ENCODE measurements at regions of chr4 and their contacts with region 1.

Region 1: DNA sequence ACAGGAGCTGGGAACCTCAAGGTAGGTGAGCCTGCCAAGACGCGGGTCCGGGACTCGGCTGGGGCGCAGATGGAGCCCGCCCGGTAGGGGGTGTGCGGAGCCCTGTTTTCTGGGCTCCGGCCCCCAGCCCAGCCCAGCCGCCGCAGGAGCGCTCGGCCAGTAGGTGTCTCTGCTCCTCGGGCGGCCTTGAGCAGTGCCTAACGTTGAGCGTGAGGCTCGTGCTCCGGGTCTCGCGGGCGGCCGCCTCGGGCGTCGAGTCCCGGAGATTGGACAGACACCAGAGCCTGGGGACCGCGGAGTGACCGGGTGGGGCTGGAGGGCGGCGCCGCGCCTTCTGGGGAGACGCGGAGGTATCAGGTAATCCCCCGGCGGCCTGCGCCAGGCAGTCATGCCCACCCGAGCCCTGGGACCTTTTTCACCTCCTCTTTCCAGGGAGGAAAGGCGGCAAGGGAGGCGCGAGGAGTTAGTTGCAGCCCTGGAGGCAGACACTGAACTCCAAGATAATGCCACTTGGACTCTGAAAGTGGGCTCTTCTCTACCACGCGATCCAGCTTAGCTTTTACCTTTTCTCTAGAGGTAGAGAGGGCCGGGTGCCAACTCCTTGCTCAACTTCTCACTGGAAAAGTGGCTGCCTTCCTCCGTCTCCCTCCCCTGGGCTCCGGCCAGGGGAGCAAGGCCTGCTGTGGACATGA is 14.5 kb upstream of the FGG start:
- DNase-seq: peak; percentile 65
- H3K4me3 ChIP-seq: peak overlapping the region; percentile 27 to 51 (median 48)
- H3K27ac ChIP-seq: no peak overlapping the region
- H3K4me1 ChIP-seq: peaks cover 17% of the 10 kb centered on the region
- H3K27me3 ChIP-seq: no peaks in the 10 kb centered on the region
- CTCF ChIP-seq: peak; percentile 60 to 85

Region 2: GRCh38 chr4:154642373-154643009 is 15.6 kb after region 1 on chr4:
- CTCF ChIA-PET with region 1: no interaction called
- dilution Hi-C with region 1: no loop called
- in situ Hi-C with region 1: no loop called
- intact Hi-C with region 1: loop called (anchors 1 kb)
- DNase-seq: peak; percentile 45
- H3K4me3 ChIP-seq: no peak overlapping the region
- H3K27ac ChIP-seq: no peak overlapping the region
- H3K4me1 ChIP-seq: peaks cover 18% of the 10 kb centered on the region
- H3K27me3 ChIP-seq: no peaks in the 10 kb centered on the region
- CTCF ChIP-seq: peak in 1 of 2 donors; percentile 14